Psoas muscle (tissue), 8 donors: ENCODE measurements at regions of chr10 and their contacts with region 1.

Region 1: DNA sequence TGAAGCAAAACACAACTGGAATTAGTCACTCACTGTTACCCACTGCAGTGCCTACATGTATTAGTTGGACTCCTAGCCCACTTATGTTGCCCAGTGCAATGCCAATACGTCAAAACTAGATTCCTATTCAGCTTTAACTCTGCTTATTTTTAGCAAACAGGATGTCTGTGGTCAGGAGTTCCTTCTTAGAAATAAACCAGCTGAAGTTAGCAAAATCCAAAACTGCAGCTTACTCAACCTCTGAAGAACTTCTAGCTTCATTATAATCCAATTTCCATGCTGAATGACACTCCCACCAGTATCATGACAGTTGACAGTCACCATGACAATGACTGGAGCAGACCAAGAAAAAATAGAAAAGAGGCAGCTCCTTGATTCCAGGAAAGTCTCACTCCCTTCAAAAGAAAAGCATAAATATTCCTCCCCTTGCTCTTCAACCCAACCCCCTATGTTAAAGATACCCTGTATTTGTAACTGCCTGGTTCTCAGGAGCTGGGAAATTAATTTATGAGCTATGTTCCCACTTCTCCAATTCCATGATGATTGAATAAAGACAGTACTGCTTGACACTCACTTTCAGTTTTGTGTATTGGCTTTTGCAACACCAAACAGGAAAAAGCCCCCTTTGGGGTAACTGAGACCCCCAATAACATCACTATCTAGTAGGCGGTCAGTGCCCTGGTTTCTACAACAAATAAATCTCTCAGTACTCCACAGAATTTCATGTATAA is 327.4 kb downstream of the SORCS1 start:
- DNase-seq: no peak
- ATAC-seq: no peak
- H3K4me3 ChIP-seq: no peak overlapping the region
- H3K27ac ChIP-seq: no peak overlapping the region
- H3K4me1 ChIP-seq: no peaks in the 10 kb centered on the region
- H3K27me3 ChIP-seq: no peaks in the 10 kb centered on the region
- CTCF ChIP-seq: no peak

Region 2: GRCh38 chr10:108749042-108749441 is 1911.9 kb after region 1 on chr10:
- intact Hi-C with region 1: loop called in 1 of 2 experiments (anchors 10 kb)
- DNase-seq: no peak
- ATAC-seq: no peak
- H3K4me3 ChIP-seq: no peak overlapping the region
- H3K27ac ChIP-seq: no peak overlapping the region
- H3K4me1 ChIP-seq: no peaks in the 10 kb centered on the region
- H3K27me3 ChIP-seq: no peaks in the 10 kb centered on the region
- CTCF ChIP-seq: no peak